Naive thymus-derived CD4-positive, alpha-beta T cell (primary cell): ENCODE measurements at regions of chr2 and their contacts with region 1.

Region 1: GRCh38 chr2:218269899-218270720 is at the starts of genes AAMP and PNKD:
- DNase-seq: peak; percentile 99 to 100 (median 100)
- ATAC-seq: peak; percentile 95
- H3K4me3 ChIP-seq: peak within 1 kb of the TSS; percentile 96
- H3K4me3 Mint-ChIP-seq: peak within 1 kb of the TSS; percentile 84 to 99 (median 93)
- H3K27ac ChIP-seq: peak within 1 kb of the TSS; percentile 92
- H3K27ac Mint-ChIP-seq: peak within 1 kb of the TSS; percentile 82 to 95 (median 92)
- H3K4me1 ChIP-seq: peaks cover 27 to 30% of the 10 kb centered on the region in 2 donors
- H3K4me1 Mint-ChIP-seq: peaks cover 30 to 59% (median 51%) of the 10 kb centered on the region in 7 donors
- H3K27me3 ChIP-seq: no peaks in the 10 kb centered on the region
- H3K27me3 Mint-ChIP-seq: no peaks in the 10 kb centered on the region
- total RNA-seq, gene AAMP: 54.1 to 67.0 (median 61.2) TPM
- total RNA-seq, gene PNKD: 18.5 to 38.4 (median 25.2) TPM

Region 2: GRCh38 chr2:216412022-216412999 is 1857.8 kb before region 1 on chr2 and contains the start of gene SMARCAL1:
- CTCF ChIA-PET with region 1: no interaction called
- POLR2A ChIA-PET with region 1: no interaction called
- intact Hi-C with region 1: loop called in 1 of 2 experiments (anchors 5 kb)
- DNase-seq: peak; percentile 93 to 98 (median 97)
- ATAC-seq: peak; percentile 97
- H3K4me3 ChIP-seq: peak within 1 kb of the TSS; percentile 89
- H3K4me3 Mint-ChIP-seq: peak within 1 kb of the TSS; percentile 85 to 99 (median 98)
- H3K27ac ChIP-seq: peak within 1 kb of the TSS; percentile 83
- H3K27ac Mint-ChIP-seq: peak within 1 kb of the TSS; percentile 86 to 97 (median 94)
- H3K4me1 ChIP-seq: peaks cover 0 to 7% of the 10 kb centered on the region in 2 donors
- H3K4me1 Mint-ChIP-seq: peaks cover 6 to 28% (median 23%) of the 10 kb centered on the region in 7 donors
- H3K27me3 ChIP-seq: no peaks in the 10 kb centered on the region
- H3K27me3 Mint-ChIP-seq: peaks cover 0 to 14% (median 3%) of the 10 kb centered on the region in 5 donors
- total RNA-seq, gene SMARCAL1: 16.2 to 30.3 (median 24.6) TPM

Region 3: DNA sequence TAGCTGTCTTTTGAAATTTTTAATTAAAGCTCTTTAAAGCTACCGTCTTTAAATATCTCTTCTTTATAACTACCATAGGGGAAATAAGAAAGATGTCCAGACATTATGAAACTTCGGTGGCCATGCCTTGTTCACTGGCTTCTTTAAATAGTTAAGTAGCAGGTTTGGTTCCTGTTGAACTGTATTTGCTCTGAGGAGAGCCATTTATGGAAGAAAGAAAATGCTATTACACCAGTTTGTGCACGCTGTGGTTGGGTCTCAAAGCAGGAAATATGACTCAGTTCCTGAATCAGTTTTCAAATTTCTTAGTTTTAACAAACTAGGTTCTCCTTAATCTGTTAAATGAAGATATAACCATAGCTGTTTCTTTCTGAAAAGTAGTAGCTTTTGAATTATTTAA is 40.9 kb before region 1 on chr2:
- CTCF ChIA-PET with region 1: interaction called, 8 read pairs
- POLR2A ChIA-PET with region 1: interaction called, 4 read pairs
- intact Hi-C with region 1: loop called (anchors 1 kb)
- DNase-seq: peak in 8 of 9 donors; percentile 34 to 58 (median 52)
- ATAC-seq: peak; percentile 88
- H3K4me3 ChIP-seq: no peak overlapping the region
- H3K4me3 Mint-ChIP-seq: peak overlapping the region; percentile 10 to 84 (median 76)
- H3K27ac ChIP-seq: peak overlapping the region; percentile 63
- H3K27ac Mint-ChIP-seq: peak overlapping the region; percentile 79 to 93 (median 87)
- H3K4me1 ChIP-seq: peaks cover 48 to 57% of the 10 kb centered on the region in 2 donors
- H3K4me1 Mint-ChIP-seq: peaks cover 64 to 87% (median 77%) of the 10 kb centered on the region in 7 donors
- H3K27me3 ChIP-seq: no peaks in the 10 kb centered on the region
- H3K27me3 Mint-ChIP-seq: no peaks in the 10 kb centered on the region

Region 4: GRCh38 chr2:218322895-218323808 is 53.0 kb after region 1 on chr2:
- CTCF ChIA-PET with region 1: interaction called, 4 read pairs
- POLR2A ChIA-PET with region 1: interaction called, 5 read pairs
- intact Hi-C with region 1: loop called in 1 of 2 experiments (anchors 2 kb)
- DNase-seq: peak; percentile 15 to 61 (median 44)
- ATAC-seq: peak; percentile 73
- H3K4me3 ChIP-seq: peak overlapping the region; percentile 64
- H3K4me3 Mint-ChIP-seq: peak overlapping the region; percentile 84 to 93 (median 88)
- H3K27ac ChIP-seq: peak overlapping the region; percentile 69
- H3K27ac Mint-ChIP-seq: peak overlapping the region in 8 of 9 donors; percentile 58 to 93 (median 84)
- H3K4me1 ChIP-seq: peaks cover 10 to 50% of the 10 kb centered on the region in 2 donors
- H3K4me1 Mint-ChIP-seq: peaks cover 25 to 78% (median 71%) of the 10 kb centered on the region in 7 donors
- H3K27me3 ChIP-seq: no peaks in the 10 kb centered on the region
- H3K27me3 Mint-ChIP-seq: peaks cover 0 to 31% (median 0%) of the 10 kb centered on the region in 5 donors

Region 5: GRCh38 chr2:218516614-218517013 is 246.5 kb after region 1 on chr2:
- CTCF ChIA-PET with region 1: no interaction called
- POLR2A ChIA-PET with region 1: interaction called, 3 read pairs
- intact Hi-C with region 1: loop called in 1 of 2 experiments (anchors 5 kb)
- DNase-seq: peak in 7 of 9 donors; percentile 9 to 46 (median 31)
- ATAC-seq: peak; percentile 74
- H3K4me3 ChIP-seq: no peak overlapping the region
- H3K4me3 Mint-ChIP-seq: no peak overlapping the region
- H3K27ac ChIP-seq: no peak overlapping the region
- H3K27ac Mint-ChIP-seq: peak overlapping the region in 1 of 9 donors; percentile 78
- H3K4me1 ChIP-seq: no peaks in the 10 kb centered on the region
- H3K4me1 Mint-ChIP-seq: peaks cover 0 to 42% (median 13%) of the 10 kb centered on the region in 7 donors
- H3K27me3 ChIP-seq: no peaks in the 10 kb centered on the region
- H3K27me3 Mint-ChIP-seq: no peaks in the 10 kb centered on the region

Region 6: DNA sequence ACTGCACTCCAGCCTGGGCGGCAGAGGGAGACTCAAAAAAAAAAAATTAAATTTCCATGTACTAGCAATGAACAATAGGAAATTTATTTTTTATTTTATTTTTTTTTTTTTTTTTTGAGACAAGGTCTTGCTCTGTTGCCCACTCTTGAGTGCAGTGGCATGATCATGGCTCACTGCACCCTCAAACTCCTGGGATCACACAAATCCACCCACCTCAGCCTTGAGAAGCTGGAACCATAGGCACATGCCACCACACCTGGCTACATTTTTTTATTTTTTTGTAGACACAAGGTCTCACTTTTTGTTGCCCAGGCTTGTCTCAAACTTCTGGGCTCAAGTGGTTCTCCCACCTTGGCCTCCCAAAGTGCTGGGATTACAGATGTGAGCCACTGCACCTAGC is 315.4 kb after region 1 on chr2:
- CTCF ChIA-PET with region 1: no interaction called
- POLR2A ChIA-PET with region 1: no interaction called
- intact Hi-C with region 1: no loop called
- DNase-seq: no peak
- ATAC-seq: no peak
- H3K4me3 ChIP-seq: no peak overlapping the region
- H3K4me3 Mint-ChIP-seq: no peak overlapping the region
- H3K27ac ChIP-seq: no peak overlapping the region
- H3K27ac Mint-ChIP-seq: peak overlapping the region in 1 of 9 donors; percentile 11
- H3K4me1 ChIP-seq: no peaks in the 10 kb centered on the region
- H3K4me1 Mint-ChIP-seq: peaks cover 0 to 23% (median 3%) of the 10 kb centered on the region in 7 donors
- H3K27me3 ChIP-seq: no peaks in the 10 kb centered on the region
- H3K27me3 Mint-ChIP-seq: no peaks in the 10 kb centered on the region

Region 7: DNA sequence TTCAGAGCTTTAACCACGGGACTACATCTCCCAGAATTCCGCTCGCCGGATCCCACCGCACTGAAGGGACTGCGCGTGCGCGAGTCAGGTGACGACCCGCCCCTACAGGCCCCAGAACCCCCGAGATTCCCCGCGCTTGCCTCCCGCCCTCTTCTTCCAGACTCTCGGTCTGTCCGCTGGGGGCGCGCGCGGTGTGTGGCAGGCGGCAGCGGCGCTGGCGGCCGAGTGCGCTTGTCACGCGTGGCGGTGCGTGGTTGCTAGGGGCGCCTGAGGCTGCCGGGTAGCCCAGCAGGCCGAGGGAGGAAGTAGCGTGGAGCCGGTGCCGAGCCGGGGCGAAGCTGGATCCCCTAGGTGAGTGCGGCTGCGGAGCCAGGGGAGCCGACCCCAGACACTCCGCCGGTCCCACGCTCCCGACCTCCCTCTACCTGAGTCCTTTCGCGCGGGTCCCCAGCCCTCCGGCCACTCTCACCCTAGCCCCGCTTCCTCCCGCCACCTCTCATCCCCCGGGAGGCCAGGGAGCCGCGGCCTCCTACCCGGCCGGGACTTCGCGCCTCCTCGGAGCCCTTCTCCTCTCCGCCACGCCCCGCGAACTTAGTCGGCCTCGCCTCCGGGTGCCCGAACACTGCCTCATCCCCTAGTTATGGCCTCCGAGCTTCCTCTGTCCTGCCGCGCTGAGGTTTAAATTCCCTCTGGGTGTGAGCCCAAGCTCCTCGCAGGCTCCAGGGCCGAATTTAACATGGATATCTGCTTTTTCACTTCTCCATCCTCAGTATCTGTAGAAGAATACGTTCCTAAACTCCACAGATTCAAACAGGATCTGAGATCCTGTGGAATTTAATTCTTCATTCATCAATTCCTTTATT is 440.8 kb after region 1 on chr2 and contains the start of gene TTLL4:
- CTCF ChIA-PET with region 1: no interaction called
- POLR2A ChIA-PET with region 1: no interaction called
- intact Hi-C with region 1: loop called (anchors 1 kb)
- DNase-seq: peak; percentile 98 to 99 (median 99)
- ATAC-seq: peak; percentile 99
- H3K4me3 ChIP-seq: peak within 1 kb of the TSS; percentile 79
- H3K4me3 Mint-ChIP-seq: peak within 1 kb of the TSS; percentile 91 to 99 (median 97)
- H3K27ac ChIP-seq: peak within 1 kb of the TSS; percentile 86
- H3K27ac Mint-ChIP-seq: peak within 1 kb of the TSS; percentile 58 to 96 (median 90)
- H3K4me1 ChIP-seq: peaks cover 8% of the 10 kb centered on the region in 2 donors
- H3K4me1 Mint-ChIP-seq: peaks cover 17 to 31% (median 19%) of the 10 kb centered on the region in 7 donors
- H3K27me3 ChIP-seq: no peaks in the 10 kb centered on the region
- H3K27me3 Mint-ChIP-seq: peaks cover 0 to 7% (median 0%) of the 10 kb centered on the region in 5 donors
- total RNA-seq, gene TTLL4: 18.7 to 35.8 (median 21.2) TPM

Region 8: GRCh38 chr2:219498280-219499057 is 1228.4 kb after region 1 on chr2 and contains the start of gene GMPPA:
- CTCF ChIA-PET with region 1: no interaction called
- POLR2A ChIA-PET with region 1: no interaction called
- intact Hi-C with region 1: loop called in 1 of 2 experiments (anchors 10 kb)
- DNase-seq: peak; percentile 78 to 95 (median 90)
- ATAC-seq: peak; percentile 94
- H3K4me3 ChIP-seq: peak within 1 kb of the TSS; percentile 85
- H3K4me3 Mint-ChIP-seq: peak within 1 kb of the TSS; percentile 91 to 99 (median 96)
- H3K27ac ChIP-seq: peak within 1 kb of the TSS; percentile 79
- H3K27ac Mint-ChIP-seq: peak within 1 kb of the TSS; percentile 76 to 97 (median 86)
- H3K4me1 ChIP-seq: peaks cover 19 to 22% of the 10 kb centered on the region in 2 donors
- H3K4me1 Mint-ChIP-seq: peaks cover 26 to 42% (median 36%) of the 10 kb centered on the region in 7 donors
- H3K27me3 ChIP-seq: peaks cover 4 to 9% of the 10 kb centered on the region in 2 donors
- H3K27me3 Mint-ChIP-seq: peaks cover 28 to 47% (median 40%) of the 10 kb centered on the region in 5 donors
- total RNA-seq, gene GMPPA: 22.4 to 58.3 (median 37.2) TPM